ENCODE measurements at regions of chr11 and their contacts with region 1.

Region 1: GRCh38 chr11:45846974-45847910 is at the start of gene CRY2:
- DNase-seq: peak; percentile 99
- ATAC-seq: peak; percentile 90
- H3K4me3 Mint-ChIP-seq: peak within 1 kb of the TSS; percentile 74
- H3K27ac Mint-ChIP-seq: peak within 1 kb of the TSS; percentile 58
- H3K4me1 Mint-ChIP-seq: peaks cover 53% of the 10 kb centered on the region
- H3K27me3 Mint-ChIP-seq: no peaks in the 10 kb centered on the region
- total RNA-seq, gene CRY2: 13.1 to 14.1 TPM

Region 2: GRCh38 chr11:44565211-44565952 is 1281.9 kb before region 1 on chr11 and contains the start of gene CD82:
- CTCF ChIA-PET with region 1: no interaction called
- POLR2A ChIA-PET with region 1: no interaction called
- intact Hi-C with region 1: loop called in 1 of 2 experiments (anchors 2 kb)
- DNase-seq: peak; percentile 100
- ATAC-seq: peak; percentile 84
- H3K4me3 Mint-ChIP-seq: peak within 1 kb of the TSS; percentile 93
- H3K27ac Mint-ChIP-seq: peak within 1 kb of the TSS; percentile 92
- H3K4me1 Mint-ChIP-seq: peaks cover 54% of the 10 kb centered on the region
- H3K27me3 Mint-ChIP-seq: no peaks in the 10 kb centered on the region
- total RNA-seq, gene CD82: 239 to 272 TPM

Region 3: GRCh38 chr11:45722144-45722543 is 125.1 kb before region 1 on chr11:
- CTCF ChIA-PET with region 1: no interaction called
- POLR2A ChIA-PET with region 1: no interaction called
- intact Hi-C with region 1: no loop called
- DNase-seq: no peak
- ATAC-seq: no peak
- H3K4me3 Mint-ChIP-seq: no peak overlapping the region
- H3K27ac Mint-ChIP-seq: no peak overlapping the region
- H3K4me1 Mint-ChIP-seq: peaks cover 12% of the 10 kb centered on the region
- H3K27me3 Mint-ChIP-seq: peaks cover 1% of the 10 kb centered on the region

Region 4: DNA sequence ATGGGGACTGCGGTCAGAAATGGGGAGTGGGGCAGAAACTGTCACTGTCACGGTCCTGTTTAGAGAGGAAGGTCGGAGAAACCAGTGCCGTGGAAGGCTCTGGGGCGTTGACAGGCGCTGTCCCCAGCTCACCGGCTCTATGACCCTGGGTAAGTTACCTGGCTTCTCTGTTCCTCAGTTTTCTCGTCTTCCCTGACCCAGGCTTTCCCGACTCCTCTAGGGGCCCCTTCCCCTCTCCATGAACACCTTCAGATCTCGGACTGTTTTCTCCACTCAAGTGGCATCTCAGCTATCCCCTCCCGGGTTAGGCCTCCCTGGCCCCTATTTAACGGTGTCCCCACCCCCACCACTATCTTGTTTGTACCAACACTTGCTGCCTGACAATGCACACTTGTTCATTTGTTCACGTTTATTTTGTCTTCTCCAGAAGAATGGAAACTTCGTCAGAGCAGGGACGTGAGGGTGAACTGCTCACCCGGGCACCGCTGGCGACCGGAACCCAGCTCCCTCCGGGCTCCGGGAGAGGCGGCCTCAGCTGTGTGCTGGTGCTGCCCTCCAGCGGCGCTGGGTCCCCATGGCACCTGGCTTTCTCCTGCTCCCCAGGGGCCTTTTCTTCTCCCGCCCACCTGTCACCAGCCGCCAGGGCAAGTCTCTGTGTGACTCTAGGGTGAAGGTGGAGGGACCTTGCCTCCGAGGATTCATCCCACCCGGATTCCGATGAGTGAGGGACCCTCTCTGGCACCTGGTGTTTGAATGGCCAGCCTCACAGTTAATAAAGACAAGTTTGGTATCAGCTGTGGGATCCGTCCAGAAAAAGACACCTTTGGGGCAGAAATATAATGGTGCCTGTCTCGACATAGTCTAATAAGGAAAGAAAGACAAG is 75.4 kb before region 1 on chr11:
- CTCF ChIA-PET with region 1: interaction called, 6 read pairs
- POLR2A ChIA-PET with region 1: no interaction called
- intact Hi-C with region 1: loop called in 1 of 2 experiments (anchors 1 kb)
- DNase-seq: peak; percentile 94
- ATAC-seq: peak; percentile 95
- H3K4me3 Mint-ChIP-seq: peak overlapping the region; percentile 78
- H3K27ac Mint-ChIP-seq: peak overlapping the region; percentile 86
- H3K4me1 Mint-ChIP-seq: peaks cover 21% of the 10 kb centered on the region
- H3K27me3 Mint-ChIP-seq: peaks cover 2% of the 10 kb centered on the region

Region 5: DNA sequence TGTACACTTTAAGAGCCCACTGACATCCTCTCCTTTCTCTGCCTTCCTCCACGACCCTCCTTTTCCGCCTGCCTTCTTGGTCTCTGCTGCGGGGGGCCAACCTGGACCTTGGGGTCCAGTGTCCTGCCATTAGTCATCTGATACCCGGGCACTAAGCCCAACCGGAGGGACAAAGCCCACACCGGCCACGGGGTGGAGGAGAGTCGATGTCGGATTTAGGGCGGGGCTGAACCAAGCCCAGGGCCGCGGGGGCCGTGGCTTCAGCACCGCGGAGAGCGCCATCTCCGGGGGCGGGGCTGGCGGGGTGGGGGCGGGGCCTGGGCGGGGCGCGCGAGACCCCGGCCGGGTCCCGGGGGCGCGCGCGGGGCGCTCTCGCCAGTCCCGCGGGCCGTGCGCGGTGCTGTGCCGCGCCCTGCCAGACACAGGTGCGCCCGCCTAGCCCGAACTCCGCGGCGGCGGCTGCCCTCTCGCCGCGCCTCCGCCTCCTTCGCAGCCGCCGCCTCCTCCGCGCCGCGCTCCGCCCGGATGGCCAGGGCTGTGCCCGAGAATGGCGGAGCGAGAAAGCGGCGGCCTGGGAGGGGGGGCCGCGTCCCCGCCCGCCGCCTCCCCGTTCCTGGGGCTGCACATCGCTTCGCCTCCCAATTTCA is 38.2 kb after region 1 on chr11 and contains the start of gene MAPK8IP1:
- CTCF ChIA-PET with region 1: no interaction called
- POLR2A ChIA-PET with region 1: no interaction called
- intact Hi-C with region 1: loop called in 1 of 2 experiments (anchors 1 kb)
- DNase-seq: peak; percentile 68
- ATAC-seq: peak; percentile 89
- H3K4me3 Mint-ChIP-seq: peak within 1 kb of the TSS; percentile 66
- H3K27ac Mint-ChIP-seq: no peak within 1 kb of the TSS
- H3K4me1 Mint-ChIP-seq: peaks cover 8% of the 10 kb centered on the region
- H3K27me3 Mint-ChIP-seq: peaks cover 3% of the 10 kb centered on the region
- total RNA-seq, gene MAPK8IP1: 0.37 to 0.39 TPM

Region 6: GRCh38 chr11:46006418-46007070 is 159.3 kb after region 1 on chr11:
- CTCF ChIA-PET with region 1: interaction called, 9 read pairs
- POLR2A ChIA-PET with region 1: no interaction called
- intact Hi-C with region 1: loop called (anchors 1 kb)
- DNase-seq: peak; percentile 16
- ATAC-seq: peak; percentile 83
- H3K4me3 Mint-ChIP-seq: no peak overlapping the region
- H3K27ac Mint-ChIP-seq: no peak overlapping the region
- H3K4me1 Mint-ChIP-seq: peaks cover 2% of the 10 kb centered on the region
- H3K27me3 Mint-ChIP-seq: no peaks in the 10 kb centered on the region

Region 7: DNA sequence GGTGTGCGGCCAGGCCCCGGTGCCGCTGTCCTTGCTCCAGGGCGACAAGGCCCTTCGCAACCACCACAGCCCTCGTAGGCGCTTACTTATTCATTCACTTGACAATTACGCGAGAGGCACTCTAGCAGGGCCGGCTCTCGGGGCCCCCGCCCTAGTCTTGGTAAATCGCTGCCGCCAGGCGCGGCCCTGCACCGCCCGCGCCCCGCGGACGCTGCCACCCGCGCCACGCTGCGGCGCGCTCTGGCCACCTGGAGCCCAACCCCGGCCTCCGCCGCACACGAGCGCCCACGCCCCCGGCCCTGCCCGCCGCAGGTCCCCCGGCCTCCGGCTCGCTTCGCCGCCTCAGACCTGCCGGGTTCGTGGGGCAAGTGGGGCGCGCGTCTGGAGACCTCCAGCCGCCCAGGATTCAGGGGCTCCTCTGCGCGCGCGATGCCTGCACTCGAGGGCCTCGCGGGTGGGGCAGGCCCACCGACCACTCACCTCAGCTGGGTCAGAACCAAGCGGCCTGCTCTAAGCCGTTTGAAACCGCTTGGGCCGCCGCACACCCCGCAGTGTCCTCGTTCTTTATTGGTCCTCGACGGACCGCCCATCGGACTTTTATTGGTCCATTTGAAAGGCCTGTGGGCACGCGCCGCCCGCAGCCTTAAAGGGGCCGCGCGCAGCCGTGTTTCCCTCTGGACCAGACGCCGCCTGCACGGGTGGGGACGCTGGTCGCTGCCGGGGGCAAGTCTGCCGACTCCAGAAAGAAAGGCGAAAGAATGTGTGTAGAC is 998.7 kb after region 1 on chr11 and contains the start of gene CKAP5:
- CTCF ChIA-PET with region 1: no interaction called
- POLR2A ChIA-PET with region 1: no interaction called
- intact Hi-C with region 1: loop called in 1 of 2 experiments (anchors 5 kb)
- DNase-seq: peak; percentile 92
- ATAC-seq: peak; percentile 92
- H3K4me3 Mint-ChIP-seq: peak within 1 kb of the TSS; percentile 86
- H3K27ac Mint-ChIP-seq: peak within 1 kb of the TSS; percentile 94
- H3K4me1 Mint-ChIP-seq: peaks cover 30% of the 10 kb centered on the region
- H3K27me3 Mint-ChIP-seq: no peaks in the 10 kb centered on the region
- total RNA-seq, gene CKAP5: 166 to 183 TPM